GM13977 (cell line): ENCODE measurements at regions of chr5 and their contacts with region 1.

Region 1: GRCh38 chr5:79020861-79021561 is 35.9 kb upstream of the ARSB start:
- DNase-seq: peak; percentile 43
- CTCF ChIP-seq: peak; percentile 77

Region 2: DNA sequence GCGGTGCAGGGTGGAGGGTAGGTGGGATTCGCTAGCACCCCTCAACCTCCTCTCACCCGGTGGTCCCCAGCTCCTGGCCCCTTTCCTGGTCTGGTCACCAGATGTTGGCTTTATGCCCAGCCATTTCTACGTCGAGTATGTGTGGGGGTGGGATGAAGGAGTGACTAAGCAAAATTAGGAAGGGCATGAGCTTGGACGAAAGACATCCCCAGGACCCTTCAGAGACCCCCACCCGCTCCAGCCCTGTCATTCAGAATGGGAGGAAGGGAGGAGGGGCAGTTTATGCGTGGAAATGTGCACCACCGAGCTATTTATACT is 49.3 kb after region 1 on chr5:
- in situ Hi-C with region 1: no loop called
- DNase-seq: no peak
- CTCF ChIP-seq: no peak

Region 3: GRCh38 chr5:79464695-79465332 is 443.8 kb after region 1 on chr5:
- in situ Hi-C with region 1: loop called (anchors 25 kb)
- DNase-seq: peak; percentile 47
- CTCF ChIP-seq: peak; percentile 61

Region 4: GRCh38 chr5:79955941-79956670 is 935.1 kb after region 1 on chr5:
- in situ Hi-C with region 1: no loop called
- DNase-seq: no peak
- CTCF ChIP-seq: no peak